Testis (tissue), 5 donors: ENCODE measurements at regions of chr20 and their contacts with region 1.

Region 1: GRCh38 chr20:3710703-3711483 is 1.5 kb downstream of the SIGLEC1 start:
- DNase-seq: peak; percentile 81
- H3K4me3 ChIP-seq: no peak overlapping the region
- H3K27ac ChIP-seq: no peak overlapping the region
- H3K4me1 ChIP-seq: no peaks in the 10 kb centered on the region
- H3K27me3 ChIP-seq: no peaks in the 10 kb centered on the region
- CTCF ChIP-seq: peak; percentile 96 to 99 (median 96)
- POLR2A ChIP-seq: no peak

Region 2: GRCh38 chr20:3521852-3522740 is 188.8 kb before region 1 on chr20:
- intact Hi-C with region 1: no loop called
- DNase-seq: no peak
- H3K4me3 ChIP-seq: no peak overlapping the region
- H3K27ac ChIP-seq: no peak overlapping the region
- H3K4me1 ChIP-seq: no peaks in the 10 kb centered on the region
- H3K27me3 ChIP-seq: no peaks in the 10 kb centered on the region
- CTCF ChIP-seq: no peak
- POLR2A ChIP-seq: no peak

Region 3: DNA sequence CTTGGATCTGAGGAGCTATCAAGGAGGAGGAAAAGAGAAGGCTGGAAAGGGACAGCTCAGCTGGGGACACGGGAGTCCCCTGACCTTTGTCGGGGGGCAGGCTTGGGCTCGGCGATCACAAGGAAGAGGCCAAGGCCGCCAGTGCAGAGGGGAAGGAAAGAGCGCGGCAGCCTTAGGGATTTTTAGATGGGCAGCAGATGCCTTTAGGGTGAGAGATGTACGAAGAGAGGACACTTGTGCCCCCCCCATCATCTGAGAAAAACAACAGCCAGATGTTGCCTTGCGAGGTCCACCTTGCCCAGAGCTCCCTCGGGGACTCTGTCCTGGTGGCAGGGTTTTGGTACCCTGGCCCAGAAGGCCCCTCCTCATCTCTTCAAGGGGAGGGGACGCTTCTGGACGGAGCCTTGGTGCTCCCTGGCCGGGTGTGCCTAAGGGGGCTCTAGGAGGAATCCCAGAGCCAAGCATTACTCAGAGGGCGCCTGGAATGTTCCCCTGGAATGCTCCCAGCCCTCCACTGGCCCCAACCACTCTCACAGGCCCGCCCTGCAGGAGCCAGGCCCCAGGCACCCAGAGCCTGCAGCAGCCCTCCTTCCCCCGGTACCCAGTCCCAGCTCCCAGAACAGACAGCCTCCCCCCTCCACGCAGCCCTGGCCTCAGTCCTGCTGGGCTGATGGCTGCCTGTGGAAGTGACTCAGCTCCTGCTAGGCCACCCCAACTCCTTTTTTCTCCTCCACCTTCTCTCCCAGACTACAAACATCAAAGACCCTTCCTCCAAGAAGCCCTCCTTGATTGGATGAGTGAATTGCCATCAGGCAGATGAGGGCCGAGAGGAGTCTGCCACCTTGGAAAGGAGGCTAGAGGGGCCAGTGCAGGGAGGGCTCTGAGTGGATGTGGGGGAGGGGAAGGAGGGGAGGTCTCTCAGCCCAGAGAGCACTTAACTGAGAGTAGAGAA is 30.9 kb before region 1 on chr20:
- intact Hi-C with region 1: loop called (anchors 5 kb)
- DNase-seq: peak; percentile 63
- H3K4me3 ChIP-seq: no peak overlapping the region
- H3K27ac ChIP-seq: peak overlapping the region; percentile 44 to 59
- H3K4me1 ChIP-seq: peaks cover 27% of the 10 kb centered on the region
- H3K27me3 ChIP-seq: no peaks in the 10 kb centered on the region
- CTCF ChIP-seq: no peak
- POLR2A ChIP-seq: no peak